Mucosa of descending colon (tissue), 3 donors: ENCODE measurements at regions of chr18 and their contacts with region 1.

Region 1: DNA sequence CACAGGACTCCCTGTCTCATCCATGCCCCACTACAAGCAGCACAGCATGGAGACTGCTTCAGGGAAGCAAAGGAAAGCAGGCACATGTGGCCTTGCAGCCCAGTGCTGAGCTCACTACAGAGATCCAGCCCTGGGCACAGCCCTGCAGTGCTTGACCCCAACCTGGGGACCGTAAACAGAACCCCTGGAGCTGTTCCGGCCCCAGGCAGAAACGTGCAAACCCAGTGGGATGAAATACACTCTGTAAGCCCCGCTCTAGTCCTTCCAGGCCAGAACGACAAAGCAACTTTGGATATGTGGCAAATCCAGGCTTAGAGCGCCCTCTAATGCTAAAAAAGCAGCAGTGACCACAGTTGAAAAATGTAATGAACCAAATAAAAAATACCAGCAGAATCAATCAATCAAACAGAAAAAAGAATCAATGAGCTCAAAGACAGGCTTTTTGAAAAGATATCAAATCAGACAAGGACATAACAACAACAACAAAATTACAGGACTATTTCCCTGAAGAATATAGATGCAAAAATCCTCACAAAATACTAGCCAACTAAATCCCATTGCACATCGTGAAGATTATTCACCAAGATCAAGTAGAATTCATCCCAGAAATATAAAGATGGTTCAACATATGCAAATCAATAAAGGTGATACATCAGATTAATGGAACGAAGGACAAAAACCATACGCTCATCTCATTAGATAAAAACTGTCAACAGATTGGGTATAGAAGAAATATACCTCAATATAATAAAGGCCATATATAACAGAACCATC is 45.6 kb downstream of the ZNF519 start:
- DNase-seq: peak in 1 of 3 donors; percentile 19
- ATAC-seq: peak; percentile 74
- H3K4me3 ChIP-seq: no peak overlapping the region
- H3K4me1 ChIP-seq: no peaks in the 10 kb centered on the region
- CTCF ChIP-seq: peak; percentile 27

Region 2: GRCh38 chr18:13826211-13826610 is 260.4 kb before region 1 on chr18:
- intact Hi-C with region 1: loop called in 1 of 2 experiments (anchors 5 kb)
- DNase-seq: no peak
- ATAC-seq: no peak
- H3K4me3 ChIP-seq: no peak overlapping the region
- H3K4me1 ChIP-seq: no peaks in the 10 kb centered on the region
- CTCF ChIP-seq: no peak